HepG2 (cell line): ENCODE measurements at regions of chr11 and their contacts with region 1.

Region 1: DNA sequence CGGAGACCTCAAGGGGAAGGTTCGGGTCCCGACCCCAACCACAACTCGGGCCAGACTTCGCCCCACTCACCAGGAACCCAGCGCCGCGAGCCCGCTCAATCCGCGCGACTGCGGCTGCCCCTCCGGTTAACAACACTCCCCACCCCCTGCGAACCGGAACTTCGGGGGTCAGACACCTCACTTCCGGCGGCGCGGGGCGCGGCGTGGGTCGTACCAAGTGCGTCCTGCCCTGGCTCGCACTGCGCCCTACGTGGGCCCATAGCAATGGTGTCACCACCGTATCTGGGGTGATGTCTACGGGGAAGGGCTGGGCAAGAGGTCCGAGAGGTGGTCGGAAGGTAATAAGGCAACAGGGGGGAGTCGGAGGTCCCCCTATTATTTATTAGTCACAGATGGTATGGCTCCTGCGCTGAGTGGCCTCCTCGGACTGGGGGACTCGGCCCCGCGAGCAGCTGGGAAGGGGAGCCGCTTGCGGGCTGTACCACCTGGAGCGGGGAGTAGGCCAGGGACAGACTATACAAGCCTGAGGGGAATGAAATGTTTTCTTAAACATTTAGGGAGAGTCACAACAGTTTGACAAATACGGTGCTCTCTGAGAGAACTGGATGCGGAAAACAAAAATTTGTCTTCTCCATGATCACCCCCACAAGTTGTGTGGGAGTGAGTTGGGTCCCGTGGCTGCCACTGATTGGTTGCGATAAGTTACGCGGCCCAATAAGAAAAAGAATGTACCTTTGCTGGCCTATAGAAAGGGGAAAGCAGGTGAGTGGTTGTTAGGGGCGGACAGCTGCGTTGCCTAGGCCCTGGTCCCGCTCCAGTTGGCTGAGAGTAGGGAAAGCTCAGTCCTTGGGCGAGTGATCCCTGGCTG is at the start of gene SYVN1:
- DNase-seq: peak; percentile 97
- ATAC-seq: peak; percentile 94
- H3K4me3 ChIP-seq: peak within 1 kb of the TSS; percentile 85 to 94 (median 92)
- H3K27ac ChIP-seq: peak within 1 kb of the TSS; percentile 96
- H3K4me1 ChIP-seq: peaks cover 25% of the 10 kb centered on the region
- H3K27me3 ChIP-seq: no peaks in the 10 kb centered on the region; a peak in 1 of 5 replicates
- CTCF ChIP-seq: peak; percentile 24
- EP300 ChIP-seq: peak in 1 of 2 experiments; percentile 58; a peak in 3 of 4 replicates
- POLR2A ChIP-seq: peak; percentile 74 to 94
- RAD21 ChIP-seq: 0 out of 2 replicates have a peak, but pooled peaks have one; percentile 18
- total RNA-seq, gene SYVN1: 7.4 and 10.3 TPM in 2 replicates

Region 2: DNA sequence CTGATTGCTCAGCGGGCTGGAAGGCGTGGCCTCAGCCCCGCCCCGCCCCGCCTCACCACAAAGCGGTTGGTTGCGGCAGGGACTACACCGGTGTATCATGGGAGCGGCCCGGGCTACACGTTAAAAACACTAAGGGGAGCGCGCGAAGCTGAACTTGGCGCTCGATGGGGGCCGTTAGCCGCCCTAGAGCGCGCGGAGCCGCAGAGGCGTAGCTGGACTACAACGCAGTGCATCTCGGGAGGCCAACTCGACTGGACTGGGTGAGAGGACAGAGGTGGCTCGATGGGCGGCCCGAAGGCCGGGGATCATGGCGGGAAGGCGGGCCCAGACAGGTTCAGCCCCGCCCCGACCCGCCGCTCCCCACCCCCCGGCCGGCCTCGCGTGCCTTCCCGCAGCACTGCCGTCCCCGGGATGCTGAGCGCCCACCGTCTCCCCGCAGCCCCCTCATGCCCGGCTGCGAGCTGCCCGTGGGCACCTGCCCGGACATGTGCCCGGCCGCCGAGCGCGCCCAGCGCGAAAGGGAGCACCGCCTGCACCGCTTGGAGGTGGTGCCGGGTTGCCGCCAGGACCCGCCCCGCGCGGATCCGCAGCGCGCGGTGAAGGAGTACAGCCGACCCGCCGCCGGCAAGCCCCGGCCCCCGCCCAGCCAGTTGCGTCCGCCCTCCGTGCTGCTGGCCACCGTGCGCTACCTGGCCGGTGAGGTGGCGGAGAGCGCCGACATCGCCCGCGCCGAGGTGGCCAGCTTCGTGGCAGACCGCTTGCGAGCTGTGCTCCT is 93.6 kb before region 1 on chr11 and contains the start of gene SAC3D1:
- CTCF ChIA-PET with region 1: no interaction called
- POLR2A ChIA-PET with region 1: interaction called, 10 read pairs
- in situ Hi-C with region 1: no loop called
- intact Hi-C with region 1: no loop called
- DNase-seq: peak; percentile 95
- ATAC-seq: peak; percentile 94
- H3K4me3 ChIP-seq: peak within 1 kb of the TSS; percentile 76 to 89 (median 81)
- H3K27ac ChIP-seq: peak within 1 kb of the TSS; percentile 87
- H3K4me1 ChIP-seq: peaks cover 24% of the 10 kb centered on the region
- H3K27me3 ChIP-seq: no peaks in the 10 kb centered on the region
- CTCF ChIP-seq: peak; percentile 10; the same call in 1 of the 2 replicates
- EP300 ChIP-seq: no peak
- POLR2A ChIP-seq: peak; percentile 13 to 66; a peak in 3 of 4 replicates
- RAD21 ChIP-seq: peak; percentile 44
- total RNA-seq, gene SAC3D1: 33.2 and 36.3 TPM in 2 replicates

Region 3: GRCh38 chr11:65111744-65112414 is 22.7 kb before region 1 on chr11 and contains the start of gene TM7SF2:
- CTCF ChIA-PET with region 1: no interaction called
- POLR2A ChIA-PET with region 1: interaction called, 53 read pairs
- in situ Hi-C with region 1: no loop called
- intact Hi-C with region 1: no loop called
- DNase-seq: peak; percentile 93
- ATAC-seq: peak; percentile 79
- H3K4me3 ChIP-seq: peak within 1 kb of the TSS; percentile 65 to 98 (median 95)
- H3K27ac ChIP-seq: peak within 1 kb of the TSS; percentile 61
- H3K4me1 ChIP-seq: peaks cover 36% of the 10 kb centered on the region
- H3K27me3 ChIP-seq: no peaks in the 10 kb centered on the region
- CTCF ChIP-seq: peak; percentile 11; the same call in 1 of the 2 replicates
- EP300 ChIP-seq: no peak
- POLR2A ChIP-seq: peak in 1 of 2 experiments; percentile 98; a peak in 2 of 4 replicates
- RAD21 ChIP-seq: no peak
- total RNA-seq, gene TM7SF2: 28.8 and 66.9 TPM in 2 replicates

Region 4: GRCh38 chr11:65117216-65118096 is 17.2 kb before region 1 on chr11 and contains the start of gene ZNHIT2:
- CTCF ChIA-PET with region 1: no interaction called
- POLR2A ChIA-PET with region 1: interaction called, 105 read pairs
- in situ Hi-C with region 1: no loop called
- intact Hi-C with region 1: no loop called
- DNase-seq: peak; percentile 96
- ATAC-seq: peak; percentile 59
- H3K4me3 ChIP-seq: peak within 1 kb of the TSS; percentile 73 to 88 (median 80)
- H3K27ac ChIP-seq: peak within 1 kb of the TSS; percentile 75
- H3K4me1 ChIP-seq: peaks cover 42% of the 10 kb centered on the region
- H3K27me3 ChIP-seq: no peaks in the 10 kb centered on the region; a peak in 1 of 5 replicates
- CTCF ChIP-seq: peak; percentile 97
- EP300 ChIP-seq: 0 out of 4 replicates have a peak, but pooled peaks of 1 of the 2 experiments have one; percentile 16
- POLR2A ChIP-seq: peak in 1 of 2 experiments; percentile 87; a peak in 2 of 4 replicates
- RAD21 ChIP-seq: peak; percentile 85
- total RNA-seq, gene ZNHIT2: 5.7 and 6.5 TPM in 2 replicates

Region 5: GRCh38 chr11:65150509-65151271 is 16.1 kb after region 1 on chr11:
- CTCF ChIA-PET with region 1: no interaction called
- POLR2A ChIA-PET with region 1: interaction called, 28 read pairs
- in situ Hi-C with region 1: no loop called
- intact Hi-C with region 1: no loop called
- DNase-seq: peak; percentile 40
- ATAC-seq: peak; percentile 86
- H3K4me3 ChIP-seq: peak overlapping the region; percentile 15 to 59 (median 36); a peak in 4 of 6 replicates
- H3K27ac ChIP-seq: no peak overlapping the region
- H3K4me1 ChIP-seq: peaks cover 43% of the 10 kb centered on the region
- H3K27me3 ChIP-seq: no peaks in the 10 kb centered on the region
- CTCF ChIP-seq: no peak
- EP300 ChIP-seq: no peak
- POLR2A ChIP-seq: no peak
- RAD21 ChIP-seq: no peak

Region 6: DNA sequence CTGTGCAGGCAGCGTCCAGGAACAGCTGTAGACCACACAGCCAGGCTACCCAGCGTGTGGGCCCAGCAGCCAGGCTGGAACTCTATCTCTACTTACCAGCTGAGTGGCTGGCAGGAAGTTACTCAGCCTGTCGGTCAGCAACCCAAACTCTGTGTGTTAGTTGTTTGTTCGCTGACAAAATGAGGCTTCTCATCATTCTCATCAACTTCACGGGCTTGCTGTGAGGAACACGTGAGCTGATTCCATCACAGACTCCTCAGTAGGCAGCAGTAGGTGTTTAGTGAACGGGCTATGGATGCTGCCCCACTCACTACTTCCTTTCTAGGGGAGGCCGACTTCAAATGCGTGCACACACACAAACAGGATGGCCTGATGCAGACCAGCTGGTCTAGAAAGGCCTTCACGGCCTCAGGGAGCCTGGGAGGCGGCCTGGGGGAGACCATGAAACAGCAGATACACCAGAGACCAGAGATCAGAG is 34.6 kb after region 1 on chr11:
- CTCF ChIA-PET with region 1: no interaction called
- POLR2A ChIA-PET with region 1: interaction called, 105 read pairs
- in situ Hi-C with region 1: no loop called
- intact Hi-C with region 1: loop called (anchors 1 kb)
- DNase-seq: no peak
- ATAC-seq: peak; percentile 11; the same call in 2 of the 3 replicates
- H3K4me3 ChIP-seq: peak overlapping the region in 2 of 3 experiments; percentile 15 to 30; a peak in 2 of 6 replicates
- H3K27ac ChIP-seq: peak overlapping the region; percentile 55
- H3K4me1 ChIP-seq: peaks cover 82% of the 10 kb centered on the region
- H3K27me3 ChIP-seq: no peaks in the 10 kb centered on the region
- CTCF ChIP-seq: no peak
- EP300 ChIP-seq: no peak
- POLR2A ChIP-seq: no peak
- RAD21 ChIP-seq: no peak

Region 7: GRCh38 chr11:65180877-65181568 is 46.4 kb after region 1 on chr11:
- CTCF ChIA-PET with region 1: interaction called, 3 read pairs
- POLR2A ChIA-PET with region 1: interaction called, 85 read pairs
- in situ Hi-C with region 1: no loop called
- intact Hi-C with region 1: loop called (anchors 1 kb)
- DNase-seq: peak; percentile 61
- ATAC-seq: peak; percentile 90
- H3K4me3 ChIP-seq: peak overlapping the region; percentile 82 to 94 (median 91)
- H3K27ac ChIP-seq: peak overlapping the region; percentile 77
- H3K4me1 ChIP-seq: peaks cover 25% of the 10 kb centered on the region
- H3K27me3 ChIP-seq: no peaks in the 10 kb centered on the region; a peak in 1 of 5 replicates
- CTCF ChIP-seq: peak; percentile 92
- EP300 ChIP-seq: no peak
- POLR2A ChIP-seq: peak in 1 of 2 experiments; percentile 47; a peak in 1 of 4 replicates
- RAD21 ChIP-seq: peak; percentile 69